ENCODE measurements at regions of chr3 and their contacts with region 1.

Region 1: GRCh38 chr3:112561731-112562688 is at the starts of genes ATG3 and SLC35A5:
- DNase-seq: peak; percentile 98
- H3K4me3 Mint-ChIP-seq: peak within 1 kb of the TSS; percentile 93
- H3K27ac Mint-ChIP-seq: peak within 1 kb of the TSS; percentile 99
- H3K4me1 Mint-ChIP-seq: peaks cover 31% of the 10 kb centered on the region
- H3K27me3 Mint-ChIP-seq: no peaks in the 10 kb centered on the region
- total RNA-seq, gene ATG3: 66.2 and 69.8 TPM in 2 replicates
- total RNA-seq, gene SLC35A5: 14.9 and 15.5 TPM in 2 replicates

Region 2: GRCh38 chr3:111978493-111979433 is 583.2 kb before region 1 on chr3 and contains the start of gene ABHD10:
- intact Hi-C with region 1: loop called (anchors 5 kb)
- DNase-seq: peak; percentile 93
- H3K4me3 Mint-ChIP-seq: peak within 1 kb of the TSS; percentile 89
- H3K27ac Mint-ChIP-seq: peak within 1 kb of the TSS; percentile 90
- H3K4me1 Mint-ChIP-seq: peaks cover 49% of the 10 kb centered on the region
- H3K27me3 Mint-ChIP-seq: peaks cover 14% of the 10 kb centered on the region
- total RNA-seq, gene ABHD10: 37.7 and 42.9 TPM in 2 replicates

Region 3: DNA sequence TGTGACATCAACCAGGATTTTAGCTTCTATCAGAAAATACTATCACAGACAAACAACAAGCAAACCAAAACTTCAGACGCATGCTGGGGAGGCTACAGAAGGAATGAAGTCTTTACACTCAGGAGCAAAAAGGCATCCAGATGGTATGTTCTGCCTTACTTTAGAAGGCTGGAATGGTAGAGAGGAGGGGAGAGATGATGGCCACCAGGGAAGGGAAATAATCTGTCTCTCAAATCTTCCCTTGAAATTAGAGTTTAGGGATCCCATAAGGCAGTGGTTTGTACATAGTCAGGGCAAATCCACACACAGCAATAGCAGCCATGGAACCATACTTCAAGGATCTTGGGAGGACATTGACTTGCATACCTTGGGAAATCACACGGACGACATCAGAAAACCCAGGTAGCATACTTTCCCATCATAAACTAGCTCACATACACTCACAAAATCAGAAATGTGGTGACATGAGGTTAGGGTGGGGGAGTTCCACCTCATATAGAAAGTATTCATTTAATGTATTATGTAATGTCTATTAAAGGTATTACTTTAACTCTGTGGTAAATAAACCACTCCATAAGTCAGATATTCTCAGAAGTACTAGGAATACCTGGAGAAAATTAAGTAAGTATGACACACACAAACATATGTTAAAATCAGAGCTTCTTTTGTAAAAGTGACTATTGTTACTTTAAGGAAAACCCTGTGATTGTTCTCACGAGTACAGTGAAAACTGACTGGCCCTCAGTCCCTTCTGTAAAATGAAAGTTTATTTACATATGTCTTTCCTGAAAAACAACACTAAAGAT is 72.1 kb before region 1 on chr3:
- intact Hi-C with region 1: loop called (anchors 2 kb)
- DNase-seq: no peak
- H3K4me3 Mint-ChIP-seq: peak overlapping the region; percentile 72
- H3K27ac Mint-ChIP-seq: peak overlapping the region; percentile 91
- H3K4me1 Mint-ChIP-seq: peaks cover 64% of the 10 kb centered on the region
- H3K27me3 Mint-ChIP-seq: no peaks in the 10 kb centered on the region

Region 4: DNA sequence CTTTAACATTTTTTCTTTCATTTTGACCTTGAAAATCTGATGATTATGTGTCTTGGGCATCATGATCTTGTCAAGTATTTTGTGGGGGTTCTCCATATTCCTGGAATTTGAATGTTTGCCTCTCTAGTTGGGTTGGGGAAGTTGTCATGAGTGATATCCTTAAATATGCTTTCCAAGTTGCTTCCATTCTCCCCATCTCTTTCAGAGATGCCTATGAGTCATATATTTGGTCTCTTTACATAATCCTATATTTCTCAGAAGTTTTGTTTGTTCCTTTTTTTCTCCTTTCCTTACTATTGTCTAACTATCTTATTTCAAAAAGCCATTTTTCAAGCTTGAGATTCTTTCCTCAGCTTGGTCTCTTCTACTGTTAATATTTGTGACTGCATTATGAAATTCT is 147.9 kb after region 1 on chr3:
- intact Hi-C with region 1: no loop called
- DNase-seq: no peak
- H3K4me3 Mint-ChIP-seq: no peak overlapping the region
- H3K27ac Mint-ChIP-seq: no peak overlapping the region
- H3K4me1 Mint-ChIP-seq: no peaks in the 10 kb centered on the region
- H3K27me3 Mint-ChIP-seq: peaks cover 41% of the 10 kb centered on the region

Region 5: GRCh38 chr3:112990672-112991602 is 428.9 kb after region 1 on chr3 and contains the start of gene GTPBP8:
- intact Hi-C with region 1: loop called (anchors 1 kb)
- DNase-seq: peak; percentile 81
- H3K4me3 Mint-ChIP-seq: peak within 1 kb of the TSS; percentile 90
- H3K27ac Mint-ChIP-seq: peak within 1 kb of the TSS; percentile 93
- H3K4me1 Mint-ChIP-seq: peaks cover 79% of the 10 kb centered on the region
- H3K27me3 Mint-ChIP-seq: no peaks in the 10 kb centered on the region
- total RNA-seq, gene GTPBP8: 22.6 and 25.0 TPM in 2 replicates

Region 6: DNA sequence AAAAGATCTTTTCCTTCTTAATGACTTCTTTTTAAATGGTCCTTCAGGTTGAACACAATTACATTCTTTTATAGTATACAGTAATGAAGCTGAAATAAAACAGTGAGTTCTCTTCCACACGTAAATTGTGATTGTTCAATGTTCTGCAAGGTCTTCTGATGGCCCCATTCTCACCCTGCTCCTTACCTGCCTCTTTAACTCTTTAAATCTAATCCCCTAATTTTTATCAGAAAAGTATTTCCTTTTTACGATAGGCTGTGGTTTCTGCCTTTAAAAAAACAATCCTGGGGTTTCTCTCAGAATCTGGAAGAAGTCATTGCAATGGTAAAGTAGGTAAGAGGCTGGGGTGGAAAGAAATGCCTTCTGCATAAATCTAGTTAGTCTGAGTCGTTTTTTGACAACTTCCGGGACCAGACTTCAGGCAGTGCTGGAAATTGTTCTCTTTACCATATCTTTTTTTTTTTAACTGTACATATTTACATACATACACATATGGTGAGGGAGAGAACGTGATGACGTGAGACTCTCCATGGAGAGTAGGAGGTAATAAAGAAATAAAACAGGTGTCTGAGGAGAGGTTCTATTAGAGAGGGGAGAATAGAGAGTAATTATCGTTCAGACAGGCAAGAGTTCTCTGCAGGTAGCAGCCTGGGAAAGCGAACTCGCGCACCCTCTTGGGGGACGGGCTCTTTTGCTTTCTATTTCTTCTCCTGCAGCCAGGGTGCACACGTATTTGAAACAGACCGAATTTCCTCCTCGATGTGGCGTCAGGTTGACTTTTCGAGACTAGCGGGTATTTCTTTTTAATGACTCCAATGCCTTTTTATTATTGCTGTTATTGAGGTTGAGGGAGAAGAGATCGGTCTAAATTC is 970.1 kb after region 1 on chr3 and contains the start of gene SIDT1:
- intact Hi-C with region 1: loop called (anchors 5 kb)
- DNase-seq: peak; percentile 64
- H3K4me3 Mint-ChIP-seq: peak within 1 kb of the TSS; percentile 100
- H3K27ac Mint-ChIP-seq: peak within 1 kb of the TSS; percentile 99
- H3K4me1 Mint-ChIP-seq: peaks cover 55% of the 10 kb centered on the region
- H3K27me3 Mint-ChIP-seq: peaks cover 10% of the 10 kb centered on the region
- total RNA-seq, gene SIDT1: 11.3 and 12.2 TPM in 2 replicates